Panc1 (cell line): ENCODE measurements at regions of chr5 and their contacts with region 1.

Region 1: DNA sequence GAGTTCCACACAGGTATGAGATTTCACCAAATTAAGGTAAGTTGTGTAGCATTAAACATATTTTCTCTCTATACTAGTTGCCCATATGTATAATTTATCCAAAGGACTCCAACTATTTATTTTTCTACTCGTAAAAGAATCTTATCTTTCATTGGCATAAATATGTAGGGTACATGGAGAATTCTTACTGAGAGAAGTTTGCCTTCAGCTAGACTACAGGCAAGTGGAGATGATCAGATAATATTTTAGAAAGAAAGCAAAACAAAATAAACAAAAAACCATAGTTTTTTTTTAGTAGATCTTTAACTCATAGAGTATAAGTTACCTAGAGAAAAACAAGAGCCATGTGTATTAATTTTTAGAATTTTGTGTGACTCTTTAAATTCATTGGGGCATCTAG is 743.1 kb upstream of the ARRDC3 start:
- DNase-seq: no peak
- ATAC-seq: no peak
- H3K4me3 ChIP-seq: no peak overlapping the region
- H3K27ac ChIP-seq: no peak overlapping the region
- H3K4me1 ChIP-seq: no peaks in the 10 kb centered on the region
- H3K27me3 ChIP-seq: no peaks in the 10 kb centered on the region
- CTCF ChIP-seq: no peak

Region 2: DNA sequence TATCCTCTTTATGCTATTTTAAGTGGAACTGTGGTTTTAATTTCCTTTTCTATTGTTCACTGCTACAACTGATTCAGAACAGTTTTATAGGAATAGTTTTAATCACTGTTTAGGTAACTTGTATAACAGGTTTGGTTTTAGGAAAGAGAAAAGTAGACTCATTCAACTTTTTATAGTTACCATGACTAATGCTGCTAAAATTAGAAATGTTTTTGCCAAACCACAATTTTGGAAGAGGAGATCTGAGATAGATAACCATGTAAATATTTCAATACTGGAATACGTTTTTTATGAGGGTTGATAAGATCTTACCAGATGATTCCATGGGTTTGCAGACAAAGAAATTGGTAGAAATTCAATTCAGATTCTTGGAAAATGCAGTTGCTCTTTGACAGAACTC is 338.5 kb before region 1 on chr5:
- CTCF ChIA-PET with region 1: interaction called, 15 read pairs
- POLR2A ChIA-PET with region 1: no interaction called
- in situ Hi-C with region 1: no loop called
- intact Hi-C with region 1: no loop called
- DNase-seq: no peak
- ATAC-seq: peak; percentile 86
- H3K4me3 ChIP-seq: no peak overlapping the region
- H3K27ac ChIP-seq: no peak overlapping the region; the same call in 1 of the 2 replicates
- H3K4me1 ChIP-seq: no peaks in the 10 kb centered on the region
- H3K27me3 ChIP-seq: no peaks in the 10 kb centered on the region
- CTCF ChIP-seq: no peak

Region 3: DNA sequence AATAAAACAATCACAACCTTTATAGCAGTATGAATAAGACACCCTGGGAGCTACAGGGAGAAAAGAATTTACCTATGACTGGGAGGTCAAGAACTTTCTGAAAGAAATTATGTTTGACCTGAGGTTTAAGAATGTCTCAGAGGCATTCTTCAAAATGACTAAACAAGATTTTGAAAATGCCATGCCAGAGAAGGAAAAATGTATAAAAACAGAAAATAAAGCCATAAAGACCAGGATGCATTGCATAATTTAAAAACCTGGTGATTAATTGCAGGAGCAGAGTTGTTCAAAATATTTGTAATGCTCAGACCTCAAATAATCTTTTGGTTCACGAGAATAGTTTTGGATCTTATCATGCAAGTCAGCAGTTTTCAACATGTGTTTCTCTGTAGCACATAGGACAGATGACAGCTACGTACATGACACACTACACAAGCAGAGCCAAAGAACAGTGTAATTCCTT is 211.6 kb after region 1 on chr5:
- CTCF ChIA-PET with region 1: no interaction called
- POLR2A ChIA-PET with region 1: no interaction called
- in situ Hi-C with region 1: no loop called
- intact Hi-C with region 1: no loop called
- DNase-seq: no peak
- ATAC-seq: no peak
- H3K4me3 ChIP-seq: no peak overlapping the region
- H3K27ac ChIP-seq: no peak overlapping the region; the same call in 1 of the 2 replicates
- H3K4me1 ChIP-seq: no peaks in the 10 kb centered on the region; the same call in 1 of the 2 replicates
- H3K27me3 ChIP-seq: no peaks in the 10 kb centered on the region
- CTCF ChIP-seq: no peak

Region 4: DNA sequence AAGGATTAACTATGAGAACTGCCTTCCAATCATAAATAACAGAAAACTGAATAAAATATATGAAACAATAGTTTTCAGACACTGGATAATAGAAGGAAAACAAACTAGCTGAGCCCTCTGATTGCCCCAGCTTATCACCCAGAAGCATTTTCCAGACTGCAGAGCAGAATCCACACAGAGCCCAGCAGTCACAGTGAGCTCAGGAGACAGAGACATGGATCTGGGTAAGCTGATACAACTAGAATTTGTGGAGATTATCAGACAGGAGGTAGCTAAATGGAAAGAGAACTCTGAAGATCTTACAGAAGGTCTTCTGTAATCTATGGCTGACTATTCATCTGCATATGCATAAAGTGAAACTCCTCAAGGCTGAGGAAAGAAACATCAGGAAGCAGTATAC is 1326.1 kb after region 1 on chr5:
- CTCF ChIA-PET with region 1: no interaction called
- POLR2A ChIA-PET with region 1: no interaction called
- in situ Hi-C with region 1: no loop called
- intact Hi-C with region 1: no loop called
- DNase-seq: no peak
- ATAC-seq: no peak
- H3K4me3 ChIP-seq: no peak overlapping the region
- H3K27ac ChIP-seq: no peak overlapping the region
- H3K4me1 ChIP-seq: no peaks in the 10 kb centered on the region
- H3K27me3 ChIP-seq: no peaks in the 10 kb centered on the region
- CTCF ChIP-seq: no peak